CD4-positive, alpha-beta memory T cell (primary cell): ENCODE measurements at regions of chr12 and their contacts with region 1.

Region 1: GRCh38 chr12:9797722-9798619 is 29.3 kb upstream of the KLRF1 start:
- DNase-seq: peak; percentile 73 to 79 (median 75)
- H3K4me3 ChIP-seq: no peak overlapping the region
- H3K4me3 Mint-ChIP-seq: peak overlapping the region in 4 of 8 donors; percentile 4 to 70 (median 41)
- H3K27ac ChIP-seq: no peak overlapping the region
- H3K27ac Mint-ChIP-seq: peak overlapping the region in 6 of 7 donors; percentile 57 to 89 (median 81)
- H3K4me1 ChIP-seq: peaks cover 51% of the 10 kb centered on the region
- H3K4me1 Mint-ChIP-seq: peaks cover 35 to 48% (median 43%) of the 10 kb centered on the region in 4 donors
- H3K27me3 ChIP-seq: no peaks in the 10 kb centered on the region
- H3K27me3 Mint-ChIP-seq: peaks cover 0 to 2% of the 10 kb centered on the region in 2 donors

Region 2: DNA sequence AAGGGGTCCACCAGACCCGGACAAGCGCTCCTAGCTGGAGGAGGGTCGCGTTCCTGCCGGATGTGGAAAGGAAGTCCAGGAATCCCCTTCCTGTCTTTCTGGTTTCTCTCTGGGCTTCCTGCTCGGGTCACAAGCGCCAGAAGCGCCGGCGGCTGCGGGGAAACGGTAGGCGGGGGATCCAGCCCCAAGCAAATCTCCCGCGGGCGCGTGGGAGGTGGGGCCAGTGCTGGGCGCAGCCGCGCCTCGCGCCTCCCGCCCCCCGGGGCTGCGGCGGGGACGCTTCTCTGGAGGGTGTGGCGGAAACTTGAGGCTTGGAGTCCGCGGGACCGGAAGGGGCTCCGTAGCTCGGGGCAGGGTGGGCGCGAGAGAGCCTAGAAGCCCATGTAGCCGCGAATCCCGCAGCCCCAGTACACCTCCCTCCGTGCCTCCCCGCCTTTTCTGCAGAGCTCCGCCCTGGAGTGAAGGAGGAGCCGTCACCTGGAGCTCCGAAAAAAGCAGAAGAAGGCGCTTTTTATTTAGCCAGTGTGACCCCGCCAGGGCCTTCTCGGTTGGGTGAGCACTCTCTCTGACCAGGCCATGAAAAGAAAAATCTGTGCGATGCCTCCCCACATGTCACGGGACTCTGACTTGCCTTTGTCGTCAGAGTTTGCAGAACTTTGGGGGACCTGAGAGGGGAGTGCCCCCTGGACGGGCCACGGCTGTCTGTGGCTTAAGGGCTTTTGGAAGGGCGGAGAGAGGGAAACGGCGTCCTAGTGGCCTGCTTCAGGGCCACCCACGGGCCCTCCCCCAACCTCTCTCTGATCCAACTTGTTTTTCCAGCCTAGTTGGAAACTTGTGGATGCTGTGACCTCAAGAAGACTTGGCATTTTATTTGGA is 149.9 kb before region 1 on chr12:
- CTCF ChIA-PET with region 1: no interaction called
- POLR2A ChIA-PET with region 1: interaction called, 4 read pairs
- intact Hi-C with region 1: loop called (anchors 5 kb)
- DNase-seq: peak; percentile 94 to 96 (median 94)
- H3K4me3 ChIP-seq: peak overlapping the region; percentile 91 to 99
- H3K4me3 Mint-ChIP-seq: peak overlapping the region; percentile 94 to 100 (median 99)
- H3K27ac ChIP-seq: peak overlapping the region; percentile 83
- H3K27ac Mint-ChIP-seq: peak overlapping the region; percentile 85 to 99 (median 97)
- H3K4me1 ChIP-seq: peaks cover 62% of the 10 kb centered on the region
- H3K4me1 Mint-ChIP-seq: peaks cover 39 to 66% (median 50%) of the 10 kb centered on the region in 4 donors
- H3K27me3 ChIP-seq: no peaks in the 10 kb centered on the region
- H3K27me3 Mint-ChIP-seq: no peaks in the 10 kb centered on the region

Region 3: DNA sequence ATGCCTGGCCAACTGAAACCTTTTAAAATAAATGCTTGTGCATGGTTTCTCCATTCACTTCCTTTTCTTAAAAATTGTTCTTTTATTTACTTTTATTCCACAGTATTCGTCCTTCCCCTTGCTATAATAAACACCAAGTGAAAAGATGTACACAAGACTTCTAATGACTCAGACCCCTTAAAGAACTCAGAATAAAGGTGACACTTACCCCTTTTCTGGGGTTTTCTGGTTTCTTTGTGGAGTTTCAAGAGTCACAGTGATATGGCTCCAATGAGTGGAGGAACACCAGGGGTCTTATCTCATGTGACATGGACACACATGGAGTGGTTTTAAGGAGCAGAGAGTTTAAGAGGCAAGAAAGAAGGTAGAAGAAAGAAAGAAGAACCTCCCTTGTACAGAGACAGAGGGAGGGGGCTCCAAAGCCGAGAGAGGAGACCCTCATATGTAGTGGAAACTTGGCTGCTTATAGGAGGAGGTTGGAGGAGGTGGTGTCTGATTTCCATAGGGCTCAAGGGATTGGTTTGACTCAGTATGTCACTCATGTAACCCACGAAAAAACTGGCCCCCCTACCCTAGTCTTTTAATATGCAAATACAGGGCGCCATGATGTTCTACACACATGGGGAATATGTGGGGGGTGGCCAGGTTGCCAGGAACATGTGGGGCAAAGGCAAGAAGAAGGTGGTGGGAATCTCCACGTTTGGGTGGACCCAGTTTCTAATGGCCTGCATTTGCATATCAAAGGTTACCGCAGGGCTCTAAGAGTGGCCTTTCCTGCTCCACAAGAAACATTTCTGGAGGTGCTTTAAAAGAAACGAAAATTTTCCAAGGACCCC is 15.2 kb before region 1 on chr12:
- CTCF ChIA-PET with region 1: interaction called, 39 read pairs
- POLR2A ChIA-PET with region 1: interaction called, 6 read pairs
- intact Hi-C with region 1: loop called (anchors 2 kb)
- DNase-seq: no peak
- H3K4me3 ChIP-seq: no peak overlapping the region
- H3K4me3 Mint-ChIP-seq: peak overlapping the region in 1 of 8 donors; percentile 36
- H3K27ac ChIP-seq: no peak overlapping the region
- H3K27ac Mint-ChIP-seq: peak overlapping the region in 2 of 7 donors; percentile 39 to 46
- H3K4me1 ChIP-seq: peaks cover 18% of the 10 kb centered on the region
- H3K4me1 Mint-ChIP-seq: peaks cover 25 to 56% (median 46%) of the 10 kb centered on the region in 4 donors
- H3K27me3 ChIP-seq: no peaks in the 10 kb centered on the region
- H3K27me3 Mint-ChIP-seq: no peaks in the 10 kb centered on the region

Region 4: GRCh38 chr12:9813821-9814809 is 16.1 kb after region 1 on chr12:
- CTCF ChIA-PET with region 1: interaction called, 36 read pairs
- POLR2A ChIA-PET with region 1: interaction called, 7 read pairs
- intact Hi-C with region 1: no loop called
- DNase-seq: peak; percentile 86 to 90 (median 89)
- H3K4me3 ChIP-seq: peak overlapping the region; percentile 54 to 57
- H3K4me3 Mint-ChIP-seq: peak overlapping the region; percentile 81 to 94 (median 86)
- H3K27ac ChIP-seq: peak overlapping the region; percentile 33
- H3K27ac Mint-ChIP-seq: peak overlapping the region in 6 of 7 donors; percentile 32 to 84 (median 68)
- H3K4me1 ChIP-seq: peaks cover 7% of the 10 kb centered on the region
- H3K4me1 Mint-ChIP-seq: peaks cover 4 to 10% (median 8%) of the 10 kb centered on the region in 4 donors
- H3K27me3 ChIP-seq: no peaks in the 10 kb centered on the region
- H3K27me3 Mint-ChIP-seq: peaks cover 12% of the 10 kb centered on the region in 2 donors

Region 5: DNA sequence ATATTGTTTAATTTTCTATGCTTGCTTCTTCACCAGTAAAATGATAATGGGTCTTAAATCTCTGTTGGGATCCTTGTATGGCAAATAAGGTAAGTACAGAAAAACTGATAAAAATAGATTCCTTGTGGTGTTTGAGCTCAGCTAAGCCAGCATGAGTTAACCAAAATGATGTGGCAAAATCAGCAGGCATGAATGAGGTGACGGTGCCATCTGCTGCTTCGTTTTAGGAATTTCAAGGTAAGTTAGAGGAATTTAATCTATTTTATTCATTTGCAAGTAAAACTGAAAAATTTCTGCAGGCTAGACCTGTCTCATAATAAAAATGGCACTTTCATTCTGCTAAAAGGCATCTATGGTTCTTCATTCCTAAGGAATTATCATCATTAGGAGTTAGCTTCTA is 342.0 kb after region 1 on chr12:
- CTCF ChIA-PET with region 1: no interaction called
- POLR2A ChIA-PET with region 1: no interaction called
- intact Hi-C with region 1: loop called (anchors 5 kb)
- DNase-seq: peak; percentile 35 to 53 (median 39)
- H3K4me3 ChIP-seq: no peak overlapping the region
- H3K4me3 Mint-ChIP-seq: no peak overlapping the region
- H3K27ac ChIP-seq: no peak overlapping the region
- H3K27ac Mint-ChIP-seq: no peak overlapping the region
- H3K4me1 ChIP-seq: no peaks in the 10 kb centered on the region
- H3K4me1 Mint-ChIP-seq: no peaks in the 10 kb centered on the region
- H3K27me3 ChIP-seq: no peaks in the 10 kb centered on the region
- H3K27me3 Mint-ChIP-seq: peaks cover 4 to 9% of the 10 kb centered on the region in 2 donors

Region 6: DNA sequence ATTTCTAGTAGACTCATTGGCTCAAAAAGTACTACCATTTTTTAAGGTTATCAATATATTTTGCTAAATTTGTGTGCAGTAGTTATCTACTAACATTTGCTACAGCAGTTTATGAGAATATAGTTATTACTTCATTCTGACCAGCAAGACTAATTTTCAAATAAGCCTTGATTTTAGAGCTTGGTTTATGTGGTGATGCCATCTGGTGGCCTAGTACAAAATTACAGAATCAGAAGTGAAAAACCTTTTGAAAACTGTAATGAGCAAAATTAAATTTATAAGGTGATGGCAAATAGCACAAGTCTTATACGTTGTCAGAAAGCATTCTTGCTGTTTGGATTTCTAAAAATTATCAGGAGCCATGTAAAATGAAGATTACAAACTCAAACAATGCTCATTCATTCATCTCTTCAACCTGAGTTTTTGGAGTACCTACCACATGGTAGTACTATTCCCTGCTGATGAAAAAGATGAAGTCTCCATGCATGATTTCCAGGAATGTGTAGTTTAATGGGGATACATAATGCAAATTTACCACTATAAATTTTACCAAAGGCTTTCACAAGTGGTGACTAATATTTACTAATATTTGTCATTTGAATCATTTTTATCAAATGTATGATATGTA is 764.4 kb after region 1 on chr12:
- CTCF ChIA-PET with region 1: no interaction called
- POLR2A ChIA-PET with region 1: no interaction called
- intact Hi-C with region 1: loop called (anchors 5 kb)
- DNase-seq: peak in 4 of 5 donors; percentile 31 to 45 (median 38)
- H3K4me3 ChIP-seq: no peak overlapping the region
- H3K4me3 Mint-ChIP-seq: no peak overlapping the region
- H3K27ac ChIP-seq: no peak overlapping the region
- H3K27ac Mint-ChIP-seq: no peak overlapping the region
- H3K4me1 ChIP-seq: no peaks in the 10 kb centered on the region
- H3K4me1 Mint-ChIP-seq: no peaks in the 10 kb centered on the region
- H3K27me3 ChIP-seq: no peaks in the 10 kb centered on the region
- H3K27me3 Mint-ChIP-seq: peaks cover 11 to 24% of the 10 kb centered on the region in 2 donors